ENCODE measurements at regions of chr13 and their contacts with region 1.

Region 1: GRCh38 chr13:74287724-74288169 is 153.5 kb upstream of the KLF12 start:
- DNase-seq: peak; percentile 64 to 98 (median 85)
- ATAC-seq: peak; percentile 67
- H3K4me3 ChIP-seq: peak overlapping the region; percentile 27 to 35
- H3K4me3 Mint-ChIP-seq: peak overlapping the region; percentile 74
- H3K27ac ChIP-seq: peak overlapping the region; percentile 48 to 82
- H3K27ac Mint-ChIP-seq: peak overlapping the region; percentile 93
- H3K4me1 ChIP-seq: peaks cover 45% of the 10 kb centered on the region
- H3K4me1 Mint-ChIP-seq: peaks cover 62% of the 10 kb centered on the region
- H3K27me3 ChIP-seq: no peaks in the 10 kb centered on the region
- H3K27me3 Mint-ChIP-seq: no peaks in the 10 kb centered on the region
- CTCF ChIP-seq: no peak

Region 2: GRCh38 chr13:73835138-73835721 is 452.5 kb before region 1 on chr13:
- CTCF ChIA-PET with region 1: interaction called, 44 read pairs
- POLR2A ChIA-PET with region 1: interaction called, 7 read pairs
- intact Hi-C with region 1: loop called (anchors 1 to 2 kb)
- DNase-seq: peak in 2 of 9 experiments; percentile 56 to 69
- ATAC-seq: peak; percentile 69
- H3K4me3 ChIP-seq: no peak overlapping the region
- H3K4me3 Mint-ChIP-seq: no peak overlapping the region
- H3K27ac ChIP-seq: no peak overlapping the region
- H3K27ac Mint-ChIP-seq: no peak overlapping the region
- H3K4me1 ChIP-seq: peaks cover 23% of the 10 kb centered on the region
- H3K4me1 Mint-ChIP-seq: peaks cover 66% of the 10 kb centered on the region
- H3K27me3 ChIP-seq: no peaks in the 10 kb centered on the region
- H3K27me3 Mint-ChIP-seq: no peaks in the 10 kb centered on the region
- CTCF ChIP-seq: peak; percentile 90

Region 3: DNA sequence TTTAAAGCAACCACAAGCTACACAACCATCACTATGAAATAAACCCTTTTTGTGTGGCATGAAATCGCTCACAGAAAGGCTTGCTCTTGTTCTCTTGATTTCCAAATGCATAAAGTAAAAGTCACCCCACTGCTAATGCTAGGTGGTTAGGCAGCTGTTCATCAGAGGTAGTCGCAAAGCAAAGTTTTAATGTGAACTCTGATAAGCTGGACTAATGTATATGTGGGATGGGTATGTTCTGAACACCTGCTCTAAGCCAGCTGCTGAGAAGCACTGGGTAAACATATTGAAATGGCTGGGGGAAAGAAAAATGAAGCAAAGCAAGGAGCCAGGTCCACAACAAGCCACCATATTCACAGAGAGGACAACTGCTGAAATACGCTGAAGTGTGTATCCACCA is 295.9 kb before region 1 on chr13:
- CTCF ChIA-PET with region 1: interaction called, 8 read pairs
- POLR2A ChIA-PET with region 1: interaction called, 4 read pairs
- intact Hi-C with region 1: loop called in 1 of 2 experiments (anchors 2 kb)
- DNase-seq: no peak
- ATAC-seq: no peak
- H3K4me3 ChIP-seq: no peak overlapping the region
- H3K4me3 Mint-ChIP-seq: no peak overlapping the region
- H3K27ac ChIP-seq: no peak overlapping the region
- H3K27ac Mint-ChIP-seq: peak overlapping the region; percentile 20
- H3K4me1 ChIP-seq: peaks cover 23% of the 10 kb centered on the region
- H3K4me1 Mint-ChIP-seq: peaks cover 70% of the 10 kb centered on the region
- H3K27me3 ChIP-seq: no peaks in the 10 kb centered on the region
- H3K27me3 Mint-ChIP-seq: no peaks in the 10 kb centered on the region
- CTCF ChIP-seq: no peak

Region 4: GRCh38 chr13:74090869-74091605 is 196.7 kb before region 1 on chr13:
- CTCF ChIA-PET with region 1: interaction called, 15 read pairs
- POLR2A ChIA-PET with region 1: interaction called, 3 read pairs
- intact Hi-C with region 1: no loop called
- DNase-seq: peak in 2 of 9 experiments; percentile 40 to 58
- ATAC-seq: peak; percentile 66
- H3K4me3 ChIP-seq: no peak overlapping the region
- H3K4me3 Mint-ChIP-seq: peak overlapping the region; percentile 9
- H3K27ac ChIP-seq: peak overlapping the region in 1 of 2 experiments; percentile 40
- H3K27ac Mint-ChIP-seq: peak overlapping the region; percentile 60
- H3K4me1 ChIP-seq: peaks cover 56% of the 10 kb centered on the region
- H3K4me1 Mint-ChIP-seq: peaks cover 73% of the 10 kb centered on the region
- H3K27me3 ChIP-seq: no peaks in the 10 kb centered on the region
- H3K27me3 Mint-ChIP-seq: no peaks in the 10 kb centered on the region
- CTCF ChIP-seq: no peak

Region 5: GRCh38 chr13:74191410-74191809 is 96.3 kb before region 1 on chr13:
- CTCF ChIA-PET with region 1: interaction called, 12 read pairs
- POLR2A ChIA-PET with region 1: interaction called, 3 read pairs
- intact Hi-C with region 1: no loop called
- DNase-seq: no peak
- ATAC-seq: no peak
- H3K4me3 ChIP-seq: no peak overlapping the region
- H3K4me3 Mint-ChIP-seq: no peak overlapping the region
- H3K27ac ChIP-seq: no peak overlapping the region
- H3K27ac Mint-ChIP-seq: no peak overlapping the region
- H3K4me1 ChIP-seq: peaks cover 9% of the 10 kb centered on the region
- H3K4me1 Mint-ChIP-seq: peaks cover 30% of the 10 kb centered on the region
- H3K27me3 ChIP-seq: no peaks in the 10 kb centered on the region
- H3K27me3 Mint-ChIP-seq: no peaks in the 10 kb centered on the region
- CTCF ChIP-seq: no peak

Region 6: GRCh38 chr13:74258961-74259360 is 28.8 kb before region 1 on chr13:
- CTCF ChIA-PET with region 1: interaction called, 22 read pairs
- POLR2A ChIA-PET with region 1: interaction called, 3 read pairs
- intact Hi-C with region 1: no loop called
- DNase-seq: no peak
- ATAC-seq: no peak
- H3K4me3 ChIP-seq: no peak overlapping the region
- H3K4me3 Mint-ChIP-seq: no peak overlapping the region
- H3K27ac ChIP-seq: no peak overlapping the region
- H3K27ac Mint-ChIP-seq: no peak overlapping the region
- H3K4me1 ChIP-seq: peaks cover 43% of the 10 kb centered on the region
- H3K4me1 Mint-ChIP-seq: peaks cover 59% of the 10 kb centered on the region
- H3K27me3 ChIP-seq: no peaks in the 10 kb centered on the region
- H3K27me3 Mint-ChIP-seq: no peaks in the 10 kb centered on the region
- CTCF ChIP-seq: no peak

Region 7: DNA sequence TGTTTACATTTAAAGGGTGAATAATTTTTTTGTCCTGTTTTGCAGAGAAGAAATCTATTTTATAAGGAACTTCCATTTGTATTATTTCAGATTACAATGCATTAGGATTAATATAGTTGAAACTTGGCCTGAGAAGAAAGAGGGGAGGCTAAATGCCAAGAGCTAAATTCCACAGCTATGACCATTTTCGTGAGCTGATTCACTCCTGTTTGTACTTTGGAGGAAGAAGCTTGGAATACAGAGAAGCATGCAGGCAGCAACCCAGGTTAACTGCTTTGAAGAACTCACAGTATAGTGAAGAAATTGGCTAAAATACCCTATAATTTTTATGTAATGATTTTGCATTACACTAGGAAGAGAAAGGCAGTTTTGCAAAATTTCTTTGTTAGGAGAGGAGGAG is 155.9 kb after region 1 on chr13:
- CTCF ChIA-PET with region 1: no interaction called
- POLR2A ChIA-PET with region 1: no interaction called
- intact Hi-C with region 1: no loop called
- DNase-seq: no peak
- ATAC-seq: no peak
- H3K4me3 ChIP-seq: no peak overlapping the region
- H3K4me3 Mint-ChIP-seq: no peak overlapping the region
- H3K27ac ChIP-seq: no peak overlapping the region
- H3K27ac Mint-ChIP-seq: no peak overlapping the region
- H3K4me1 ChIP-seq: no peaks in the 10 kb centered on the region
- H3K4me1 Mint-ChIP-seq: no peaks in the 10 kb centered on the region
- H3K27me3 ChIP-seq: no peaks in the 10 kb centered on the region
- H3K27me3 Mint-ChIP-seq: no peaks in the 10 kb centered on the region
- CTCF ChIP-seq: no peak